ENCODE measurements at regions of chr7 and their contacts with region 1.

Region 1: GRCh38 chr7:141533149-141533949 is 17.9 kb upstream of the AGK start:
- DNase-seq: peak; percentile 43 to 76 (median 60)
- ATAC-seq: peak; percentile 81 to 90 (median 84)
- H3K4me3 ChIP-seq: no peak overlapping the region
- H3K27ac ChIP-seq: peak overlapping the region in 3 of 12 donors; percentile 1 to 28 (median 2)
- H3K4me1 ChIP-seq: peaks cover 0 to 14% (median 1%) of the 10 kb centered on the region in 12 donors
- H3K27me3 ChIP-seq: peaks cover 0 to 7% (median 0%) of the 10 kb centered on the region in 9 donors
- CTCF ChIP-seq: peak; percentile 88 to 98 (median 95)
- POLR2A ChIP-seq: no peak

Region 2: GRCh38 chr7:140810830-140811556 is 722.4 kb before region 1 on chr7:
- intact Hi-C with region 1: loop called in 8 of 10 experiments (anchors 2 to 10 kb)
- DNase-seq: peak in 4 of 5 donors; percentile 34 to 59 (median 46)
- ATAC-seq: peak; percentile 71 to 94 (median 88)
- H3K4me3 ChIP-seq: no peak overlapping the region
- H3K27ac ChIP-seq: no peak overlapping the region
- H3K4me1 ChIP-seq: peaks cover 0 to 10% (median 2%) of the 10 kb centered on the region in 12 donors
- H3K27me3 ChIP-seq: no peaks in the 10 kb centered on the region
- CTCF ChIP-seq: peak; percentile 63 to 87 (median 74)
- POLR2A ChIP-seq: no peak

Region 3: GRCh38 chr7:140914083-140914482 is 619.3 kb before region 1 on chr7:
- intact Hi-C with region 1: no loop called
- DNase-seq: no peak
- ATAC-seq: no peak
- H3K4me3 ChIP-seq: no peak overlapping the region
- H3K27ac ChIP-seq: no peak overlapping the region
- H3K4me1 ChIP-seq: peaks cover 0 to 19% (median 13%) of the 10 kb centered on the region in 12 donors
- H3K27me3 ChIP-seq: no peaks in the 10 kb centered on the region
- CTCF ChIP-seq: no peak
- POLR2A ChIP-seq: no peak

Region 4: DNA sequence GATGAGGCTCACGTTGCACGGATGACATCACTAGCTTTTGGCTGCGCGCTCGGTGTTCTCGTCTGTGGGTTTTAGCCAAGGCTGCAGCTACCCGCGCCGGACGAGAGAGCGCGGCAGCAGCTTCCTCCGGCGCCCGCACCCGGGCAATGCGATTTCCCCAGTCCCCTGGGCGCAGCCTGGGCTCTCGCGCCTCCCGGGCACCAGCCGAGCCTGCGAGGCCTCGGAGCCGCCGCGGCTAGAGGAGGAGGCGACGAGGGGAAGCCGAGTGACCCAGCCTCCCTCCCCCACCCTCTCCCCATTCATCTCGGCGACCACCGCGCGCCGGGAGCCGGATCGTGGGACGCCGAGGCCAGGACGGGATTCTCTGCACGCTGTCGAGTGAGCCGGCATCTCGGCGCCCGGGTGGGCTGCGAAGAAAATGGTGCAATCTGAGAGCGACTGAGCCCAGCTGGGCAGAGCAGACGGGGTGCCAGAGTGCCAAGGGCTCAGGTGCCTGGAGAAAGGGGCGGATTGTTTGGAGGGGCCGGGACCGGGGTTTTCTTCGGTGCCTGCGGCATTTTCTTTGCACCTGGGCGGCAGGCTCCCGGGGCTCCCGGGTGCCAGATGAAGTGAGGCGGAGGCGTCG is 460.7 kb before region 1 on chr7:
- intact Hi-C with region 1: loop called in 6 of 10 experiments (anchors 5 kb)
- DNase-seq: peak; percentile 46 to 77 (median 66)
- ATAC-seq: peak; percentile 63 to 85 (median 80)
- H3K4me3 ChIP-seq: peak overlapping the region; percentile 46 to 67 (median 58)
- H3K27ac ChIP-seq: peak overlapping the region in 5 of 12 donors; percentile 12 to 61 (median 54)
- H3K4me1 ChIP-seq: peaks cover 0 to 42% (median 20%) of the 10 kb centered on the region in 12 donors
- H3K27me3 ChIP-seq: peaks cover 0 to 77% (median 8%) of the 10 kb centered on the region in 9 donors
- CTCF ChIP-seq: peak in 1 of 12 donors; percentile 8
- POLR2A ChIP-seq: no peak

Region 5: DNA sequence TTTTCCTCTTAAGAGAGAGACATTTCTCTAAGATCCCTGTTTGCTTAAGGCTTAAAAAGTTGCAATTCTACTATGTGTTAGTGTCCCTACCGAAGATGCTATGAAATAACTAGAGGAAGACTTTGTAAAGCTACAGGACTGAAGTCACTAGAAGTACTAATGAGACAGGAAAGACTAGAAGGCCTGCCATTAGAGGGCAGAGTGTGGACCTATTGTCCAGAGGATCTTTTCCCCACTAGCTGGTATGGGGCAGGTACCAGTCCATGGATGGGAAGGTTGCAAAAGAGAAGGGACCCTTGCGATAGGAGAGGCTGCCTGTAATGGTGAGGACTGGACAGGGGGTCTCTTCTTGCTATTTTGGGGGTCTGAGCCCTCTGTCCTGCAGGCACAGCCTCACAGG is 281.4 kb before region 1 on chr7:
- intact Hi-C with region 1: loop called in 4 of 10 experiments (anchors 5 to 10 kb)
- DNase-seq: no peak
- ATAC-seq: peak in 1 of 4 donors; percentile 41
- H3K4me3 ChIP-seq: no peak overlapping the region
- H3K27ac ChIP-seq: no peak overlapping the region
- H3K4me1 ChIP-seq: no peaks in the 10 kb centered on the region
- H3K27me3 ChIP-seq: no peaks in the 10 kb centered on the region
- CTCF ChIP-seq: peak in 5 of 12 donors; percentile 12 to 28 (median 18)
- POLR2A ChIP-seq: no peak

Region 6: DNA sequence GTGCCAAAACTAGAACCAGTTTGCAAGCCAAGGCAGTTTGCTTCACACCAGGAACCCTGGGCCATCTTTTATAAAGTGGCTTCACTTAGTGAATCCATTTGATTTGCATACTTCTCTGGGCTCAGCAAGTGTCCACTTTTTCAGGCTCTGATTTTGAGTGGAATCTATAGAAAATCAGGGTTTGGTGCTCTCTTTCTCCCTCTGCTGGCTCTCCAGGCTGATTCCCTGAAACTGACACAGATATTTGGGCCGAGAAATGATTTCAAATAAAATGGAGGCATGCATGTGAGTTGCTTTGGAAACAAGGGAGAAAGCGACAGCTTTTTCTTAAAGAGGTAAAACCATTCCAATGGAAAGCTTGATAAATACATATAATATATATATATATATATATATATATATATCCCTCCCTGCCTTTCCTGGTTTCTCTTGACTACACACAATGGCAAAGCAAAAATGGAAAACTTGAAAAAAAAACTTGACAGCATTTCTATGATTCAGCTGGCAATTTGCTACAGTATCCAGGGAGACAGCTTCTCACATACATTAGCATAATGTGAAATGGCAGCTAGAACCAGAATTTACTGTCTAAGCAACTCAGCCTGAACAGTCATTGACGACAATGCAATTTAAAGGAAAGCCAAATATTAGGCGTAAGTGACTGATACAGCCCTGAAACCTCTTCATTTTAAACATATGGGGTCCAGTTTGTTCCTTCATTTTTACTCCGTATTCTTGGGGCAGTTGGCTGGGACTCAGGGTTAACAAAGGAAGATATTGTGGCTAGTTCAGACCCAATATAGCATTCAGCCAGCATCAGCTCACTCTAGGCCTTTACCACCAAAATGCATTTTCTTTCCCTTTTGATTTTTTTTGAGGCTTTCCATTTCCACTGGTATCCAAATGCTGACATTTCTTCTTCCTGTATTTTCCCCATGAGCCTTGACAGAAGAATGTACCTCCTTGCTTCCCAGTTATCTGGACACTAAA is 271.0 kb before region 1 on chr7:
- intact Hi-C with region 1: loop called in 4 of 10 experiments (anchors 10 kb)
- DNase-seq: no peak
- ATAC-seq: peak in 1 of 4 donors; percentile 33
- H3K4me3 ChIP-seq: no peak overlapping the region
- H3K27ac ChIP-seq: no peak overlapping the region
- H3K4me1 ChIP-seq: peaks cover 0 to 17% (median 0%) of the 10 kb centered on the region in 12 donors
- H3K27me3 ChIP-seq: no peaks in the 10 kb centered on the region
- CTCF ChIP-seq: peak in 4 of 12 donors; percentile 9 to 28 (median 19)
- POLR2A ChIP-seq: no peak

Region 7: GRCh38 chr7:141276031-141276430 is 257.3 kb before region 1 on chr7:
- intact Hi-C with region 1: loop called in 6 of 10 experiments (anchors 5 to 10 kb)
- DNase-seq: peak in 1 of 5 donors; percentile 59
- ATAC-seq: peak in 3 of 4 donors; percentile 68 to 90 (median 86)
- H3K4me3 ChIP-seq: no peak overlapping the region
- H3K27ac ChIP-seq: no peak overlapping the region
- H3K4me1 ChIP-seq: peaks cover 0 to 15% (median 0%) of the 10 kb centered on the region in 12 donors
- H3K27me3 ChIP-seq: no peaks in the 10 kb centered on the region
- CTCF ChIP-seq: no peak
- POLR2A ChIP-seq: no peak

Region 8: DNA sequence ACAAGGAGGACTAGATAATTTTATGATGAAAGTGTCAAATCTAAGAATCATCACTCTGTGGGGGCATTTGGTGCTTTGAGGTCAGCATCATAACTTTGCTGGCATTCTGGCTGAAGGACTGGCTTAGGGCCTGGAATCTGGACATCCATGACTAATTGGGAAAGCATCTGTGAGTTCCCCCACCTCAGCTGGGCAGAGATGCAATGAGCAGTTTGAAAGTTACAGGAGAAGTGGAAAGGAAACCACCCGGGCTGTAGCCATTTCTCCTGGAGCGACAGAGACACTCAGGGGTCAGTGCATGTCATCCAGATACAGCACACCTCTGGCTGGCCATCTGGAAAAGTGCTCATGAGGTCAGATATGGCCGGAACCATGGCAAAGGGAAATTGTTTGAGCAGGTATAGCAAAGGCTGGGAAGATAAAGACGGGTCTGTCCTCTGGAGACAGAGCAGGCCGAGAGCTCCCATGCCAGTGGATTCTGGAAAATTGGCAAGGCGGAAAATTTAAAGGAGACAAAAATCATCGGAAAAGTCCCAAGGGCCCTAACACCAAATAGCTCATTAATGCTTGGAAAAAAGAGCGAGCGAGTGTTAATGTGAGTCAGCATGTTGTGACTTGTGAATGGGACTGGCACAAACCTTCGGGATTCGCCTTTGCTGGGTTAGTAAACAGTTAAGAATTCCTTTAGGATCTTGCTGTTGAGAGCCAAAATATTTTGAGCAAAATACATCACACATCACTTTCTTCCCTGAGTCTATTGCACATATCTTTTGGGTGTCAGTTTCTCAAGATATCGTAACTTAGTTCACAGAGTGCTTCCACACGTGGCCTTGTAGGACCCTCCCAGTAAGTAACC is 170.5 kb before region 1 on chr7:
- intact Hi-C with region 1: loop called in 1 of 10 experiments (anchors 10 kb)
- DNase-seq: peak in 3 of 5 donors; percentile 31 to 50 (median 33)
- ATAC-seq: peak; percentile 27 to 63 (median 58)
- H3K4me3 ChIP-seq: no peak overlapping the region
- H3K27ac ChIP-seq: peak overlapping the region; percentile 24 to 87 (median 62)
- H3K4me1 ChIP-seq: peaks cover 0 to 74% (median 26%) of the 10 kb centered on the region in 12 donors
- H3K27me3 ChIP-seq: no peaks in the 10 kb centered on the region
- CTCF ChIP-seq: no peak
- POLR2A ChIP-seq: no peak

Measured in heart left ventricle (tissue), 16 donors.